Body of pancreas (tissue), 4 donors: ENCODE measurements at regions of chr7 and their contacts with region 1.

Region 1: GRCh38 chr7:64794171-64794844 is at the start of gene ZNF138:
- DNase-seq: peak; percentile 95 to 97 (median 96)
- ATAC-seq: peak; percentile 100
- H3K4me3 ChIP-seq: peak within 1 kb of the TSS; percentile 54 to 66
- H3K27ac ChIP-seq: peak within 1 kb of the TSS; percentile 43 to 78 (median 72)
- H3K4me1 ChIP-seq: peaks cover 11% of the 10 kb centered on the region
- H3K27me3 ChIP-seq: no peaks in the 10 kb centered on the region
- CTCF ChIP-seq: peak in 2 of 7 experiments; percentile 17 to 28
- POLR2A ChIP-seq: peak; percentile 44 to 79 (median 77)
- total RNA-seq, gene ZNF138: 4.9 to 10.4 TPM

Region 2: DNA sequence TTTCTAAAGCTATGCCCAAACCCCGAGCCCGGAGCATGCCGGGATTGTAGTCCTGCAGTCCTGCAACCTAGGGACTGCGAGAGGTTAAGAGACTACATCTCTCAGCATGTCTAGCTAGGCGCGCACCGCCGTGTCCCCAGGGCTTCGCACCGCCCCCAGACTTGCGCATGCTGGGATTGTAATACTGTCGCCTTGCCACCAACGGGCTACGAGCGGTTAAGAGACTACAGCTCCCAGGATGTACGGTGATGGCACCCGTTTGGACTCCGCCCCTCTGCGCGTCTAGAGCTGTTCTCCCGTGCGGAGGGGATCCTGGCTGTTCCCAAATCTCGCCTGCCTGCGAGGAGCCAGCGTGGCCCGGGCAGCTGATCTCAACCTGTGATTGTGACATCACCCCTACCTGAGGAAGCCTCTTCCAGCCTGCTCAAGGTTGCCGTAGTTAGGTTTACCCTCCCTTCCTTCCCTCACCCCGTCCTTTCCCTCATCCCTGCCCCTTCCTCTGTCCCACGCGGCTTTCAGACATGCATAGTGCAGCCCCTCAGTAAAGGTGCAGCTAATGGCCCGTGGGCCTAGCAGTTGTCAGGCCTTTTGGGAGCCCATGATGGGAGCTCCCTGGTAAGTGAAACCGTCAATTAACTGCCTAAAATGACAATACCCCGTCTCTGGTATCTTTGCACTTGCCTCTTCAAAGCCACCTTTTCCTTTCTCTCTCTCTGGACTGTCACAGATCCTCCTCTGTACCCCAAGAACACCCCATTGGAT is 486.9 kb before region 1 on chr7:
- intact Hi-C with region 1: loop called (anchors 10 kb)
- DNase-seq: peak; percentile 92 to 97 (median 95)
- ATAC-seq: peak; percentile 98
- H3K4me3 ChIP-seq: peak overlapping the region; percentile 20 to 43
- H3K27ac ChIP-seq: peak overlapping the region; percentile 84 to 87 (median 86)
- H3K4me1 ChIP-seq: peaks cover 6% of the 10 kb centered on the region
- H3K27me3 ChIP-seq: no peaks in the 10 kb centered on the region
- CTCF ChIP-seq: peak in 4 of 7 experiments; percentile 50 to 60 (median 52)
- POLR2A ChIP-seq: peak; percentile 34 to 78 (median 73)

Region 3: GRCh38 chr7:64574540-64575126 is 219.7 kb before region 1 on chr7:
- intact Hi-C with region 1: no loop called
- DNase-seq: peak in 3 of 4 donors; percentile 32 to 65 (median 38)
- ATAC-seq: peak; percentile 68
- H3K4me3 ChIP-seq: no peak overlapping the region
- H3K27ac ChIP-seq: no peak overlapping the region
- H3K4me1 ChIP-seq: peaks cover 6% of the 10 kb centered on the region
- H3K27me3 ChIP-seq: no peaks in the 10 kb centered on the region
- CTCF ChIP-seq: no peak
- POLR2A ChIP-seq: no peak